MCF 10A (cell line): ENCODE measurements at regions of chr17 and their contacts with region 1.

Region 1: DNA sequence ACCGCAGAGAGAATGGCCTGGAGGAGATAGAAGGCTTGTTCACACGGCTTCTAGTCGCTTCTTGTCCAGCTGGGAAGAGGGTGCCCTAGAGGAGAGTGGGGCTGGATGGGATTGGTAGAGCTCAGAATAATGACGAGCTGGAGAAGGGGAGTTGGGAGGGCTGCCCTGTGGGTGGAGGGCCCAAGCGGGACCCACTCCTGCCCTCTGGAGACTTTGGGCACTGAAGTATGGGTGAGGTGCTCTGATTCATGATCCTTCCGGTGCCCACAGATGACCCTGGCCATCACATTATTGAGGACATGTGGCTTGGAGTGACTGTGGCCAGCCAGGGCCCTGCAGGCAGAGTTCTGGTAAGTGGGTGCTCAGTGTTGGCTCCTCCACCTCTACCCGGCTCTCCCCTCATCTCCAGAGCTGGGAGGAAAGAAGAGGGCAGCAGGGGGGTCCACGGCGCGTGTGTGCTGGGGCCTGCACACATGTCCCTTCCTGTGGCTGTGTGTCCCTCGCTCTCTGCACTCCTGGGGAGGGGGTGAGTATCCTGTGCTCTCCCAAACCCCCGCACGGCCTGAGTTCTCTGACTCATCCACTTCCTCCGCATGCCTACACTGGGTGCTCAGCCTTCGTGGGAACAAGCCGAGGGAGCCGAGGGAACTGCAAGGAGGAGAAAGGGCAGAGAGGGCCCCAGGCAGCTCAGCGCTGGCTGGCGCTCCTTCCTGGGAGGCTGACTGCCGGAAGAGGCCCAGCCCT is 8.5 kb downstream of the ITGA3 start:
- DNase-seq: peak; percentile 99
- H3K4me3 Mint-ChIP-seq: peak overlapping the region; percentile 63
- H3K27ac Mint-ChIP-seq: peak overlapping the region; percentile 95
- H3K4me1 Mint-ChIP-seq: peaks cover 59% of the 10 kb centered on the region
- H3K27me3 Mint-ChIP-seq: no peaks in the 10 kb centered on the region
- CTCF ChIP-seq: no peak

Region 2: GRCh38 chr17:49861150-49861892 is 203.1 kb before region 1 on chr17:
- CTCF ChIA-PET with region 1: no interaction called
- POLR2A ChIA-PET with region 1: no interaction called
- intact Hi-C with region 1: loop called (anchors 1 kb)
- DNase-seq: peak; percentile 65
- H3K4me3 Mint-ChIP-seq: no peak overlapping the region
- H3K27ac Mint-ChIP-seq: no peak overlapping the region
- H3K4me1 Mint-ChIP-seq: no peaks in the 10 kb centered on the region
- H3K27me3 Mint-ChIP-seq: no peaks in the 10 kb centered on the region
- CTCF ChIP-seq: peak; percentile 89

Region 3: GRCh38 chr17:49952209-49952911 is 112.1 kb before region 1 on chr17:
- CTCF ChIA-PET with region 1: no interaction called
- POLR2A ChIA-PET with region 1: no interaction called
- intact Hi-C with region 1: no loop called
- DNase-seq: peak; percentile 86
- H3K4me3 Mint-ChIP-seq: no peak overlapping the region
- H3K27ac Mint-ChIP-seq: no peak overlapping the region
- H3K4me1 Mint-ChIP-seq: peaks cover 5% of the 10 kb centered on the region
- H3K27me3 Mint-ChIP-seq: peaks cover 44% of the 10 kb centered on the region
- CTCF ChIP-seq: peak; percentile 80

Region 4: GRCh38 chr17:50026901-50027630 is 37.4 kb before region 1 on chr17:
- CTCF ChIA-PET with region 1: interaction called, 28 read pairs
- POLR2A ChIA-PET with region 1: interaction called, 192 read pairs
- intact Hi-C with region 1: no loop called
- DNase-seq: peak; percentile 89
- H3K4me3 Mint-ChIP-seq: peak overlapping the region; percentile 82
- H3K27ac Mint-ChIP-seq: peak overlapping the region; percentile 84
- H3K4me1 Mint-ChIP-seq: peaks cover 22% of the 10 kb centered on the region
- H3K27me3 Mint-ChIP-seq: no peaks in the 10 kb centered on the region
- CTCF ChIP-seq: peak; percentile 91

Region 5: DNA sequence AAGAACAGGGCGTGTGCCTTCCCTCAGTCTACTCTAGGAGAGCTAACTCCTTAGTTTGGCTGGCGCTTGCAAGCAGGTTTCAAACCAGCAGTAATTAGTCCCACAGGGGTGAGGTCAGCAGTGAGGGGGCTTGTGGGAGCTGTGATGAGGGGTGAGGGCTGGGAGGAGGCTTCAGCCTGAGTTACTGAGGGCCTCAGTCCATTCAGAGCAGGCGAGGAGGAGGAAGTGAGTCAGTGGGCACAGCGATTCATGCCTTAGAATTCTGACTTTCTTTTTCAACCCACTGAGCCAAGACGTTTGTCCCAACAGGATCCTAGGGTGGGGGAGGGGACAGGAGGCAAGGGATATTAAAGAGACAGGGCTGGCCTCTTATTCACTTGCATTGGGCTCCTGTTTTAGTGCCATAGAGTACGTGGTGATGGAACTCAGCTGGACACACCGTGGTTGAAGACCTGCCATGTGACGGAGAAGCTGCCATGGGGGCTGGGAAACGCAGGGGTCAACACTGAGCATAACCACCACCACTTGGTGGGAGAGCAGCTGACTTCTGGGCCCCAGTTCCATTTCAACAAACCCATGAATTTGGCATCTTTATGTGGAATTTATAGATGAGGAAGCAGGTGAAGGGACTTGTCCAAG is 16.8 kb before region 1 on chr17:
- CTCF ChIA-PET with region 1: interaction called, 5 read pairs
- POLR2A ChIA-PET with region 1: interaction called, 141 read pairs
- intact Hi-C with region 1: no loop called
- DNase-seq: peak; percentile 97
- H3K4me3 Mint-ChIP-seq: peak overlapping the region; percentile 32
- H3K27ac Mint-ChIP-seq: peak overlapping the region; percentile 88
- H3K4me1 Mint-ChIP-seq: peaks cover 83% of the 10 kb centered on the region
- H3K27me3 Mint-ChIP-seq: no peaks in the 10 kb centered on the region
- CTCF ChIP-seq: no peak

Region 6: DNA sequence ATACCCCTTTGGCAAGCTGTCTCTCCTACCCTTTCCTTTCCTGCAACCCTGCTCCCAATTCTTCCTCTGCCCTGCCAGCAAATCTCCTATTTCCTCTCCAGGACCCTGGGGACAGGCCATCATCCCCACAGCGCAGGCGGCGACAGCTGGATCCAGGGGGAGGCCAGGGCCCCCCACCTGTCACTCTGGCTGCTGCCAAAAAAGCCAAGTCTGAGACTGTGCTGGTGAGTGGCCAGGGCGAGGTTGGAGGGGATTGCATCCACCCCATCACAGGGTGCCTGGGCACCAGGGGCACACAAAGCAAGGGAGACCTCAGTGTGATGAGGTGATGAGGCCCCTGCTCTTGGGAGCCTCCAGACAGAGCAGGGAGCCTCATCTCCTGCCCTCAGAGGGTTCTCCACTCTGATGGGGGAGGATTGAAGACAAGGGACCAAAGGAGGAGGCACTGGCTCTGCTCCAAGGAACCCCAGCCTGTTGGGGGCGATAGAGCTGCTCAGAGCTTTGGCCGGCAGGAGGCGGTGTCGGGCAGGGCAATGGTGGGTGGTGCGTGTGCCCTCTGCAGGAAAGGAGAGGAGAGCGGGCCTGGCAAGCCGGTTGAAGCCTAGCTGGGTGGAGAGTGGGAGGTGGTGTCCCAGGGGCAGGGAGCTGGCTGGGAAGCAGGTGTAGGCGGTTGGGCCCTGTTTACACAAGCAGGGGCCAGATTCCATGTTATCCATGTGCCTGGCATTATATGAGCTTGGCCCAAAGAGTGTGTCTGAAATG is 15.1 kb after region 1 on chr17:
- CTCF ChIA-PET with region 1: interaction called, 15 read pairs
- POLR2A ChIA-PET with region 1: interaction called, 29 read pairs
- intact Hi-C with region 1: loop called (anchors 2 kb)
- DNase-seq: peak; percentile 74
- H3K4me3 Mint-ChIP-seq: no peak overlapping the region
- H3K27ac Mint-ChIP-seq: peak overlapping the region; percentile 43
- H3K4me1 Mint-ChIP-seq: peaks cover 12% of the 10 kb centered on the region
- H3K27me3 Mint-ChIP-seq: no peaks in the 10 kb centered on the region
- CTCF ChIP-seq: peak; percentile 54

Region 7: GRCh38 chr17:50087246-50087911 is 22.9 kb after region 1 on chr17:
- CTCF ChIA-PET with region 1: interaction called, 79 read pairs
- POLR2A ChIA-PET with region 1: interaction called, 29 read pairs
- intact Hi-C with region 1: loop called (anchors 2 kb)
- DNase-seq: peak; percentile 69
- H3K4me3 Mint-ChIP-seq: no peak overlapping the region
- H3K27ac Mint-ChIP-seq: peak overlapping the region; percentile 27
- H3K4me1 Mint-ChIP-seq: no peaks in the 10 kb centered on the region
- H3K27me3 Mint-ChIP-seq: no peaks in the 10 kb centered on the region
- CTCF ChIP-seq: peak; percentile 85